Activated CD4-positive, alpha-beta T cell treated with anti-CD3 and anti-CD28 coated beads, Interleukin-2, amount 10 ng/mL, durations not matched to agents 24 days and 14 days (primary cell): ENCODE measurements at regions of chr3 and their contacts with region 1.

Region 1: DNA sequence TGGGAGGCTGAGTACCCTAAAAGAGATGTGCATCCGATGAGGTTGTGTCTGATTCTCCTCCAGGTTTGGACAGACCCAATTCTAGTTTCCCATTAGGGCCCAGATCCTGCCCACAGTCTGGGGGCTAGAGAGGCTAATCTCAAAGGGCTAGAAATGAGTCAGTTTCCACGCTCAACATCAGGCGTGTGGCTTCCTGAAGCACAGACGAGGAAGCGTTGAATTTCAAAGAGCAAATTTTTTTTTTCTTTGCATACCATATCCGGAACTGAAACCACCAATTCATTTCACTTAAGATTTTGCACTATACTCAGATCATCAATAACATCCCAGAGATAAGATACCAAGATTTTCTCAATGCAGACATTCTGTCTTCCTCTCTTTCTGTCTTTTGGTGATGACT is 173.8 kb upstream of the BCL6 start:
- DNase-seq: peak; percentile 91
- H3K4me3 Mint-ChIP-seq: peak overlapping the region; percentile 76
- H3K27ac Mint-ChIP-seq: peak overlapping the region; percentile 96
- H3K4me1 Mint-ChIP-seq: peaks cover 71% of the 10 kb centered on the region
- H3K27me3 Mint-ChIP-seq: no peaks in the 10 kb centered on the region

Region 2: DNA sequence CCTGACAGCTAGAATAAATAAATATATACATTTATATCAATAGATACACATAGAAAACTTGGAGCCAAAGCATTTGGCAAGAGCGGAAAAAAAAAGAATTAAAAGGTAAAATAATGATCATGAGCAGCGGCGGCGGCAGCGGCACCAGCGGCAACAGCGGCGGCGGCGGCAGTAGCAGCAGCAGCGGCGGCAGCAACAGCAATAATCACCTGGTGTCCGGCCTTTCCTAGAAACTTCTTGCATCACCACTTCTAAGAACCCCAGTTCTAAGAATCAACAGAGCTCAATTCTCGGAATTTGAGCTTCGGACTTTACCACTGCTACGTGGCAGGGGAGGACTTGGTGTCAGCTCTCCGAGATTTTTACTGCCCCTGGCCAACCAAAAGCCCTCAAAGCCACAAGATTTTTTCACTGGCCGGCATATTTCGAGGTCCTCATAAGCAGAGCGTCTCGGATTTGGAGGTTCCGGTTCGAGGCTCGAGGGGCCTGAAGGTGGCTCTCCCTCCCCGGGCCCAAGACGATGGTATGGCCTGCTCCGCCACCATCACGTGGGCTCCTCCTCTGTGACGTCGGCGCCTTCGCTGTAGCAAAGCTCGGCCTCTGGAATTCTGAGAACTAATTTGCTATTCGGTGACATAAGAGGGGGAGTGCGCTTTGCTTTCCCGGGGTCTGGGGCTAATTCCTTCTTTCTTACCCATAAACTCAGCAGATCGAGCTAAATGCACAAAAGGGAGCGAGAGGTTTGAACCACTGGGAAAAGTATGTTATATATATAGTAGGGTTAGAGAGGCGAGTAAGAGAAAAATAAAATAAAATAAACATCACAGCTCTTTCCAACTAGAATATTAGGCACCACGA is 173.6 kb before region 1 on chr3 and contains the start of gene BCL6:
- intact Hi-C with region 1: loop called (anchors 1 kb)
- DNase-seq: peak; percentile 97
- H3K4me3 Mint-ChIP-seq: peak within 1 kb of the TSS; percentile 98
- H3K27ac Mint-ChIP-seq: peak within 1 kb of the TSS; percentile 99
- H3K4me1 Mint-ChIP-seq: peaks cover 61% of the 10 kb centered on the region
- H3K27me3 Mint-ChIP-seq: no peaks in the 10 kb centered on the region
- total RNA-seq, gene BCL6: 41.7 and 51.7 TPM in 2 replicates

Region 3: DNA sequence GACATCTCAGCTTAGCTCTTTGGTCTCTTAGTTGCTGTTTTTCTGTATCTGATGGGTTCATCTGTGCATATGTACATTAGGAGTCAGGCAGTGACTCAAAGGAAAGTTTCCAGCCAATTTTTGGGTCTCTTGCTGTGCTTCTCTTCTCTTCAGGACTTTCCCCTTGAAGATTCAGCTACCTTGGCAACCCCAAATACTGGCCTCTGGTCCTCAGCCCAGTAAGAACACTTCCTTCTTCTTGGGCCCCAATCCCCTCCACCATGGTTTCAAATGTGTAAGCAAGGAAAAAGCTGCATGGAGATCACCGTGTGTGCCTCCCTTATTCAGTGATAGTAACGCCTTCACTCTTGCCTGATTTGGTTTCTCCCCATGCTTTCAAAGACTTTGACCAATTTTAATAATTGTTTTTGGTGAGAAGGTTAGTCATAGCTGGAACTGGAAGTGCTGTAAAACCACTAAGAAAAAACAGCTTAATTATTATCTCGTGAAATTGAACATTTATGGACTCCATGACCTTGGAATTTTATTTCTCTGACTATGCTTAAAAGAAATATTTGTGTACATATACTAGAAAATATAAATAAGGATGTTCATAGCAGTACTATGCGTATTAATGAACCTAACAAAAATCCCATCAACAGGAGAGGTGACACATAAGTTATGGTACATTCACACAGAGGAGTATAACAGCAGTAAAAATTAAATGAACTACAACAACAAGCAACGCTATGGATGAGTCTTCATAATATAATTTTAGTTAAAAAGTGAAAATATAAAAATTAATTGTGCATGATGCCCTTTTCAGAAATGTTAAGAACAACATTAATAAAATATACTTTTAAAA is 48.5 kb before region 1 on chr3:
- intact Hi-C with region 1: loop called (anchors 1 kb)
- DNase-seq: no peak
- H3K4me3 Mint-ChIP-seq: no peak overlapping the region
- H3K27ac Mint-ChIP-seq: peak overlapping the region; percentile 90
- H3K4me1 Mint-ChIP-seq: peaks cover 24% of the 10 kb centered on the region
- H3K27me3 Mint-ChIP-seq: no peaks in the 10 kb centered on the region

Region 4: GRCh38 chr3:188049606-188050530 is 130.8 kb after region 1 on chr3:
- intact Hi-C with region 1: no loop called
- DNase-seq: peak; percentile 82
- H3K4me3 Mint-ChIP-seq: peak overlapping the region; percentile 33
- H3K27ac Mint-ChIP-seq: peak overlapping the region; percentile 38
- H3K4me1 Mint-ChIP-seq: peaks cover 26% of the 10 kb centered on the region
- H3K27me3 Mint-ChIP-seq: no peaks in the 10 kb centered on the region

Region 5: DNA sequence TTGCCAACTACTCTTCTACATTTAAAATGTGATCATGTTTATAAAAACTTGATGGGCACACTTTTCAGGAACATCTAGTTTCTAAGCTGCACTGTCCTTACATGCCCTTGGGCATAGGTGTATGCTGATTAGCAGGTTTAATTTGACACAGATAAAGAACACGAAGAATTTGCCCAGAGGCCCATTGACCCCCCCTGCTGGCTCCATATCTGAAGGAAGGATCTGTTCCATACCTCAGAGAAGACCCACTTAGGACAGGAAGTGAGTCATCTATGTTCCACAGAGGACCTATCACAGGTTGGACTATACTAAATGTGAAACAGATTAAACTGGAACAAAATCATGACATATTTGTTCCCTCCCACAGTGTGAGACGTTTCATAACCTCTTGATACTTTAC is 142.1 kb after region 1 on chr3:
- intact Hi-C with region 1: loop called (anchors 1 kb)
- DNase-seq: peak; percentile 85
- H3K4me3 Mint-ChIP-seq: peak overlapping the region; percentile 66
- H3K27ac Mint-ChIP-seq: peak overlapping the region; percentile 88
- H3K4me1 Mint-ChIP-seq: peaks cover 32% of the 10 kb centered on the region
- H3K27me3 Mint-ChIP-seq: no peaks in the 10 kb centered on the region

Region 6: DNA sequence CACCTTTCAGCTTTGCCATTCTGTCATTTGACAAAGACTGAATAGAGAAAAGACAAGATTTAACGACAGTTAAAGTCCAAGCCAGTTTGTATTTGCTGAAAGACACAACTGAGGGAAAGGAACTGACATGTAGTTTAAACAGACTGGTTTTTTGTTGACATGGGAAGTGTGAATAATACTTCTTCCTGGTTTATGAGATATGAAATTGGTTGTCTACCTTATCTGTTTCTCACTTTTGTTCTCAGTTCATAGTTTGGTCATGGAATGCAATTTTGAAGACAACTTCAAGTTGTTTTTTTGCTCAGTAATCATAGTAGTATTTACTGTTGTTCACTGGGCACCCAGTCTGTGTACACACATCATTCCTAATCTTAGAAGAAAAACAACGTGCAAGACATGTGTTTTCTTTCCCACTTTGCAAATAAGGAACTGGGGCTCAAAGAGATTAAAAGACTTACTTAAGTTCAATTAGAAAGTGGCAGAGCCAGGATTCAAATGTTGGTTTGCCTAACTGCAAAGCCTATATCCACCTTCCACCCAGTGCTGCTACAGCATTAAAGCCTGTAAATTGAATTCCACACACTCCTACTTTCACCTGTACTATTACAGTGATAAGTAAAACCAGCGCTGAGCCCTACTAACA is 338.5 kb after region 1 on chr3:
- intact Hi-C with region 1: loop called (anchors 1 kb)
- DNase-seq: no peak
- H3K4me3 Mint-ChIP-seq: no peak overlapping the region
- H3K27ac Mint-ChIP-seq: peak overlapping the region; percentile 85
- H3K4me1 Mint-ChIP-seq: peaks cover 47% of the 10 kb centered on the region
- H3K27me3 Mint-ChIP-seq: no peaks in the 10 kb centered on the region

Region 7: DNA sequence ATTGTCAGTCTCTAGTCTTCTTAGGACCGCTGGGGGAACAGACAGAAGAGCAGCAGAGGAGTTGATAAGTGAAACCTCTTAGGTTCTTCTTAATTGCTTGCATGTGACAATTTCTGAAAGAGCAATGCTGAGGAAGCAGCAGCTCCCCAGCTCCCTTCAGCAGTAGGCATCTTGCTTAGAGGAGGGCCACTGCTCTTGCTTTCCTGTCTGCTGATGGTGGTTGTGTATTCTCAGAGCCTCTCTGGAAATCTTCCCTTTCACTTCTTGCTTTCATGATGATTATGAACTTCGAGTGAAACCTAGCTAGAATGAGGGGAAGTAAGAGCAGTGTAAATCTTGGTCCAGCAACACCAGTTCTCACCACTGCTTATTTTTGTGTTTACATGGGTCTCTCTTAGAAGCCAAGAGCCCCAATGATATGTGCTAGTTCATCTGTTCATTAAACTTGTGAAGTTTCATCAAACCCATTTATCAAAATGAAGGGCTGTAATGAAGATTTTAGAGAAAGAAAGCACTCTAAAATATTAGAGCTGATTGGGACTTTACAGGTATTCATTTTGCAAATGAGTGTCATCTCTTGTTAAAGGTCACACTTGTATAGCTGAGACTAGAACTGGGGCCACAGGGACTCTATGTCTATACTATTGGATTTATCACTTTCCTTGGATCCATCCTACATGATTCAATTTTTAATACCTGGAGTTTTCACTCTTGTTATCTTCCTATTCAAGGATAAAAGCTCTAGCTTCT is 481.6 kb after region 1 on chr3:
- intact Hi-C with region 1: loop called (anchors 5 kb)
- DNase-seq: peak; percentile 81
- H3K4me3 Mint-ChIP-seq: peak overlapping the region; percentile 18
- H3K27ac Mint-ChIP-seq: peak overlapping the region; percentile 68
- H3K4me1 Mint-ChIP-seq: peaks cover 62% of the 10 kb centered on the region
- H3K27me3 Mint-ChIP-seq: no peaks in the 10 kb centered on the region

Region 8: GRCh38 chr3:188914552-188914951 is 995.5 kb after region 1 on chr3:
- intact Hi-C with region 1: loop called (anchors 1 kb)
- DNase-seq: no peak
- H3K4me3 Mint-ChIP-seq: peak overlapping the region; percentile 23
- H3K27ac Mint-ChIP-seq: peak overlapping the region; percentile 87
- H3K4me1 Mint-ChIP-seq: peaks cover 37% of the 10 kb centered on the region
- H3K27me3 Mint-ChIP-seq: no peaks in the 10 kb centered on the region